Left lung (tissue), 14 donors: ENCODE measurements at regions of chr3 and their contacts with region 1.

Region 1: GRCh38 chr3:172836390-172836997 is 86.0 kb downstream of the ECT2 start:
- DNase-seq: peak in 1 of 4 donors; percentile 52
- ATAC-seq: peak; percentile 69
- H3K4me3 ChIP-seq: no peak overlapping the region
- H3K27ac ChIP-seq: no peak overlapping the region
- H3K4me1 ChIP-seq: no peaks in the 10 kb centered on the region
- H3K27me3 ChIP-seq: no peaks in the 10 kb centered on the region
- CTCF ChIP-seq: peak; percentile 46 to 54

Region 2: DNA sequence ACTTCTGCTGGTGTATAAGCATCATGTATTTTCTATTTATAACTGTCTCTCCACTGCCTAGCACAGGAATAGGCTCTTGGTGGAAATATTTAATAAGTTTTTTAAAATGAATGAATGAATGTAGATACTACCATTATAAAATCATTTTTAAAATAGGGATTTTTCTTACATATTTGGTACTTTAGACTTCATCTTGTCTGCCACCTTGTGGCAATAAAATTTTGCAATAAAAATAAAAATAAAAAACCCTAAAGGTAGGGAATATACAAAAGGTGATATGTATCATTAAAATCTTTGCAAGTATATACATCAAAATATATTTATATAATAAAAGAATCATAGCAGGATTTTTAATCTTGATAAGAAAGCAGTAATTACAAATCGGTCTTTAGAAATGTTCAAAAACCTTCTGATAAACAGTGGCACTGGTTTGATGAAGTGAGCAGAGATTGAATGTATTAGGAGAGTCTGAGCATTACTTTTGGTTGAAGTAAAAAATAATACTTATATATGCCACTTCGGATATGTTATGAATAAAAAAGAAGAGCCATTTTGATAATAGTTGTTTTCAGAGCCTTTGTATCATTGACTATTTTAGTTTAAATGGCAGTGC is 209.4 kb after region 1 on chr3:
- intact Hi-C with region 1: loop called in 1 of 2 experiments (anchors 10 kb)
- DNase-seq: peak in 1 of 4 donors; percentile 10
- ATAC-seq: no peak
- H3K4me3 ChIP-seq: no peak overlapping the region
- H3K27ac ChIP-seq: no peak overlapping the region
- H3K4me1 ChIP-seq: no peaks in the 10 kb centered on the region
- H3K27me3 ChIP-seq: no peaks in the 10 kb centered on the region
- CTCF ChIP-seq: peak in 1 of 2 donors; percentile 20